Psoas muscle (tissue), 8 donors: ENCODE measurements at regions of chr1 and their contacts with region 1.

Region 1: DNA sequence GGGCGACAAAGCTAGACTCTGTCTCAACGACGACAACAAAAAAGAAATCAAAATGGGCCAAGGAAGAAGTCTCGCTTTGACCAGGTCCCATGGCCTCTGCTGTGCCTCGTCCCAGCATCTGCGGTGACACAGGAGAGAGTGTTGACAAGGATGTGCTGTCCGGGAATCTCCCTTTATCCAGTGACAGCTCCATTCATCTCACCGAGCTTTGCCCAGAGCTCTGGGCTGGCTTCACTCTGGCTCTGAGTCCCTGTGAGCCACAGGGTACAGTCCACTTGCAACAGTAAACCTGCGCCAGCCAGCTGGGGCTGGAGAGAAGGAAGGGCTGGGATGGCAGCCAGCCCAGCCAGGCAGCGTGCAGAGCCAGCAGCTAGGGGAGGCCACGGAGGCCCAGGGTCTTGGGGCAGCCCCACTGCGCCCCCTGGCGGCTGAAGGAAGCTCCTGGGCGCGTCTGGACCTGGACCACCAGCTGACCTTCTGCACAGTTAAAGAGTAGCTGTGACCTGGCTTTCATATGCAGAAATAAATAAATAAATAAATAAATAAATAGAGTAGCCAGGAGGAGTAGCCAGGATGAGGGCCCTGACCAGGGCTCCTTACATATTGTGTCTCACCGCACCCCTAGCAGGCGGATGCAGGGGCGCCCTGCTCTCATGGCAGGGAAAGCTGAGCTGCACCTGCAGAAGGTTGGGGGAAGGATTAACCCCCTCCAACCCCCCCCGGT is 29.7 kb downstream of the ENO1 start:
- DNase-seq: peak; percentile 94 to 98
- ATAC-seq: peak; percentile 92 to 95 (median 93)
- H3K4me3 ChIP-seq: no peak overlapping the region
- H3K27ac ChIP-seq: peak overlapping the region; percentile 83
- H3K4me1 ChIP-seq: peaks cover 23% of the 10 kb centered on the region
- H3K27me3 ChIP-seq: no peaks in the 10 kb centered on the region
- CTCF ChIP-seq: peak; percentile 93

Region 2: DNA sequence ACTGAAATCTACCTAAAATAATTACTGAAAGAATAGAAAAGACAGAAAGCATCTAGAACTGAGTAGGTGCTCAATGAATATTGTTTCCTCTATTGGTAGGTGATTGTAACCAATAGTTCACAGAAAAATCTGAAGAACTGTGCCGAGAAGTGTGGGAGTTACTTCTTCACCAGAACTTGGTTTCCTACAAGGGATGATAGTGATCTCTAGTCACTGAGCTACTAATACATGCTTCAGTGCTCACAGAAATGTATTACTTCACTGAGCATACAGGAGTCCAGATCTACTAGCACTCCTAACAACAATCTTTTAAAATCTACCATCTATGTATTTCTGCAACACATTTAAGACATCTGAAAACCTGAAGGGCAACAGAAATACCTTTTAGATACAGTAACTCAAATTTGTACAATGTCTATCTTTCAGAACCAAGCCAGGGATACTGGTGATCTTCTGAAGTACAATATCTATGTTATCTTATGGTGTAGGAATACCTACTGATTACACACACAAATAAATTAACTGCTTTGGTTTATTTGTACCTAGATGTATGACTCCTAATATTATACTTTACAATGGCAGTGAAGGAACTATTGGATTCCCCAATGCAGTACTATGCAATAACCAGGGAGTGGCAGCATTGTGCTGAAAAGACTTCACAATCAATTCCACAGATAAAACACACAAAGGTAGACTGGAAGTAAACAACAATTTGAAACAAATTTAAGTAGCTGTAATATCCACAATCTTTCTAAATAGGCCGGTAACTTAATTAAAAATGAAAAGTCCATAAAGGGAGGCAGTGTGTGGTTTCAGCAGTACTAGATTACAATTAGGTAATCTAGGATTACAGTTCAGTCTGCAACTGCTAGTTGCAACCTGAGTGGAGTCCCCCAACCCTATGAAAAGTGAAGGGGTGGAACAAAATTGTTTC is 287.9 kb before region 1 on chr1:
- intact Hi-C with region 1: loop called in 1 of 2 experiments (anchors 5 kb)
- DNase-seq: no peak
- ATAC-seq: peak; percentile 79 to 88 (median 84)
- H3K4me3 ChIP-seq: no peak overlapping the region
- H3K27ac ChIP-seq: no peak overlapping the region
- H3K4me1 ChIP-seq: peaks cover 5% of the 10 kb centered on the region
- H3K27me3 ChIP-seq: no peaks in the 10 kb centered on the region
- CTCF ChIP-seq: peak; percentile 96

Region 3: GRCh38 chr1:8702850-8703810 is 145.7 kb before region 1 on chr1:
- intact Hi-C with region 1: loop called in 1 of 2 experiments (anchors 2 kb)
- DNase-seq: peak; percentile 92 to 97
- ATAC-seq: peak; percentile 89 to 94 (median 94)
- H3K4me3 ChIP-seq: peak overlapping the region; percentile 76
- H3K27ac ChIP-seq: peak overlapping the region; percentile 85
- H3K4me1 ChIP-seq: peaks cover 55% of the 10 kb centered on the region
- H3K27me3 ChIP-seq: no peaks in the 10 kb centered on the region
- CTCF ChIP-seq: peak; percentile 2

Region 4: GRCh38 chr1:8727809-8728213 is 121.0 kb before region 1 on chr1:
- intact Hi-C with region 1: loop called (anchors 5 kb)
- DNase-seq: peak; percentile 36 to 73
- ATAC-seq: peak; percentile 53 to 88 (median 69)
- H3K4me3 ChIP-seq: no peak overlapping the region
- H3K27ac ChIP-seq: peak overlapping the region; percentile 2
- H3K4me1 ChIP-seq: peaks cover 18% of the 10 kb centered on the region
- H3K27me3 ChIP-seq: no peaks in the 10 kb centered on the region
- CTCF ChIP-seq: no peak

Region 5: DNA sequence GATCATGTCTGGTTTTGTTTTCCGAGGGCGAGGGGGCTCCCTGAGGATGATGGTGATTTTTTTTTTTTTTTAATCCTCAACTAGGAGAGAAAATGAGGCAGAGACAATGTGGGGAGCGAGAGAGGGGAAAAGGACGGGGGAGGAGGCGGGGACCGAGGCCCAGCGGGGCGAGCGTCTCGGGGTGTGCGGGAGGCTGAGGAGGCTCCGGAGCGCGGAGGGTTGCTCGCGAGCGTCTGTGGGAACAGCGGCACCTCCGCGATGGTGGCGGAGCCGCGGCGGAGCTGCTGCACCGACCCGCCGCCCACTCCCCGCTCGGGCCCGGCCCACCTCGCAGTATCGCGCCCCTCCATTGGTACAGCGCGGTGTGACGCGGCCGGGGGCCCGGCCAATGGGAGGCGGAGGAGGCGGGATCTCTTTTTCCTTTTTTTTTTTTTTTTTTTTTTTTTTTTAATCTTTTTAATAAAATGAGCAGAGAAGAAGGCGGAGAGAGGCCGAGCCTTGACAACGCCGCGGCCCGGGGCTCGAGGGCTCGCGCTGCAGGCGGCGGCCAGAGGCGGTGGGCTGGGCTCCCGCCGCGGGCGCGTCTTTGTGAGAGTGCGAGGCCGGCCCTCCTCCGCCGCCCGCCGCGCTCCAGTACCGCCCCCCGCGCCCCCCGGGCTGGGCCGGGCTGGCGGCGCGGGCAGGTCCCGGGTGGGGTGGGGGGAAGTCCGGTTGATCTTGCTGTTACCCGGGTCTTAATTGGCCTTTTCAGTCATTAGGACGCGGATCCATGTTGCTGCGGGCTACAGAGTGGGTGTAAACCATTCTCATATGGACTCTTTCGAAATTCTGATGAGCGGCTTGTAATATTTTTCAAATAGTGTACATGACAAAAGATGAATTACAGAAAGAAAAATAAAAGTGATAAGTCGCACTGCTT is 31.2 kb before region 1 on chr1 and contains the start of gene RERE:
- intact Hi-C with region 1: loop called in 1 of 2 experiments (anchors 2 kb)
- DNase-seq: peak; percentile 94 to 97
- ATAC-seq: peak; percentile 97 to 99 (median 98)
- H3K4me3 ChIP-seq: peak within 1 kb of the TSS; percentile 91
- H3K27ac ChIP-seq: peak within 1 kb of the TSS; percentile 96
- H3K4me1 ChIP-seq: peaks cover 39% of the 10 kb centered on the region
- H3K27me3 ChIP-seq: no peaks in the 10 kb centered on the region
- CTCF ChIP-seq: no peak
- total RNA-seq, gene RERE: 56.7 to 308 (median 165) TPM

Region 6: DNA sequence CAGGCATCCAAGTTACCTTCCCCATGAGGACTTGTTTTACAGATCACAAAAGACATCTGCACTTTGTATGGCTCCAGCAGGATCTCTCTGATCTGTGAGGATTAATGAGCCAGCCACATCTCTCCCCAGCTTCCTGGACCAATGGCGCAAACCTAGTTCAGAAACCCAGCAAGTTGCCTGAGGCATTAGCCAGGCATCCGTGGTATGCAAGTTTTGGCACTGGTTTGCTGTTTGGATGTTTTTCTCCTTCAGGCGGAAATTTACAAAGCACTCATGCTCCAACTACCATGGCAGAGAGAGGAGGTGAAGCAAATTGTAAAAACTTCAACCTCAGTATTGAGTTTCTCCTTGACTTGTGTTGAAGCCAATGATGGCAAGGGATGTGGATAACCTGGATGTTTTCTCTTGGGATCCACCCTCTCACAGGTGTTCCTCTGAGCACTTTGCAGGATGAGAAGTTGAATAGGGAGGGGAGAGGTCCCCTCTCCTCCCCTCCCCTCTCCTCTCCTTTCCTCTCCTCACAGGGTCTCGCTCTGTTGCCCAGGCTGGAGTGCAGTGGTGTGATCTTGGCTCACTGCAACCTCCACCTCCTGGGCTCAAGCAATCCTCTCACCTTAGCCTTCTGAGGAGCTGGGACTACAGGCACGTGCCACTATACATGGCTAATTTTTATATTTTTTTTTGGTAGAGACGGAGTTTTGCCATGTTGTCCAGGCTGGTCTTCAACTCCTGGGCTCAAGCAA is 55.3 kb after region 1 on chr1:
- intact Hi-C with region 1: no loop called
- DNase-seq: peak in 1 of 2 donors; percentile 46
- ATAC-seq: peak in 3 of 4 donors; percentile 44 to 67 (median 62)
- H3K4me3 ChIP-seq: no peak overlapping the region
- H3K27ac ChIP-seq: no peak overlapping the region
- H3K4me1 ChIP-seq: peaks cover 4% of the 10 kb centered on the region
- H3K27me3 ChIP-seq: no peaks in the 10 kb centered on the region
- CTCF ChIP-seq: no peak

Region 7: GRCh38 chr1:9196129-9197040 is 347.6 kb after region 1 on chr1:
- intact Hi-C with region 1: no loop called
- DNase-seq: peak; percentile 72 to 80
- ATAC-seq: peak; percentile 58 to 79 (median 64)
- H3K4me3 ChIP-seq: peak overlapping the region; percentile 40
- H3K27ac ChIP-seq: peak overlapping the region; percentile 42
- H3K4me1 ChIP-seq: peaks cover 26% of the 10 kb centered on the region
- H3K27me3 ChIP-seq: peaks cover 0 to 20% (median 1%) of the 10 kb centered on the region in 3 donors
- CTCF ChIP-seq: peak; percentile 80